Natural killer cell (primary cell): ENCODE measurements at regions of chr6 and their contacts with region 1.

Region 1: GRCh38 chr6:137641474-137642077 is 147.4 kb upstream of the OLIG3 start:
- DNase-seq: peak; percentile 47 to 85
- ATAC-seq: peak; percentile 82 to 95 (median 92)
- H3K4me3 ChIP-seq: no peak overlapping the region
- H3K4me3 Mint-ChIP-seq: no peak overlapping the region
- H3K27ac ChIP-seq: no peak overlapping the region
- H3K27ac Mint-ChIP-seq: no peak overlapping the region
- H3K4me1 ChIP-seq: peaks cover 2% of the 10 kb centered on the region
- H3K4me1 Mint-ChIP-seq: peaks cover 0 to 5% of the 10 kb centered on the region in 2 donors
- H3K27me3 ChIP-seq: no peaks in the 10 kb centered on the region
- H3K27me3 Mint-ChIP-seq: peaks cover 8 to 31% of the 10 kb centered on the region in 2 donors
- CTCF ChIP-seq: peak; percentile 86

Region 2: GRCh38 chr6:136846046-136846445 is 795.5 kb before region 1 on chr6:
- intact Hi-C with region 1: loop called (anchors 10 kb)
- DNase-seq: peak in 1 of 2 donors; percentile 71
- ATAC-seq: peak in 2 of 3 donors; percentile 65 to 68
- H3K4me3 ChIP-seq: no peak overlapping the region
- H3K4me3 Mint-ChIP-seq: no peak overlapping the region
- H3K27ac ChIP-seq: no peak overlapping the region
- H3K27ac Mint-ChIP-seq: no peak overlapping the region
- H3K4me1 ChIP-seq: no peaks in the 10 kb centered on the region
- H3K4me1 Mint-ChIP-seq: no peaks in the 10 kb centered on the region
- H3K27me3 ChIP-seq: no peaks in the 10 kb centered on the region
- H3K27me3 Mint-ChIP-seq: no peaks in the 10 kb centered on the region
- CTCF ChIP-seq: peak; percentile 83

Region 3: GRCh38 chr6:136967876-136968752 is 673.5 kb before region 1 on chr6:
- intact Hi-C with region 1: loop called (anchors 1 kb)
- DNase-seq: peak; percentile 44 to 77
- ATAC-seq: peak; percentile 82 to 99 (median 95)
- H3K4me3 ChIP-seq: no peak overlapping the region
- H3K4me3 Mint-ChIP-seq: no peak overlapping the region
- H3K27ac ChIP-seq: no peak overlapping the region
- H3K27ac Mint-ChIP-seq: no peak overlapping the region
- H3K4me1 ChIP-seq: peaks cover 5% of the 10 kb centered on the region
- H3K4me1 Mint-ChIP-seq: peaks cover 0 to 10% of the 10 kb centered on the region in 2 donors
- H3K27me3 ChIP-seq: peaks cover 9% of the 10 kb centered on the region
- H3K27me3 Mint-ChIP-seq: peaks cover 35 to 57% of the 10 kb centered on the region in 2 donors
- CTCF ChIP-seq: peak; percentile 56

Region 4: DNA sequence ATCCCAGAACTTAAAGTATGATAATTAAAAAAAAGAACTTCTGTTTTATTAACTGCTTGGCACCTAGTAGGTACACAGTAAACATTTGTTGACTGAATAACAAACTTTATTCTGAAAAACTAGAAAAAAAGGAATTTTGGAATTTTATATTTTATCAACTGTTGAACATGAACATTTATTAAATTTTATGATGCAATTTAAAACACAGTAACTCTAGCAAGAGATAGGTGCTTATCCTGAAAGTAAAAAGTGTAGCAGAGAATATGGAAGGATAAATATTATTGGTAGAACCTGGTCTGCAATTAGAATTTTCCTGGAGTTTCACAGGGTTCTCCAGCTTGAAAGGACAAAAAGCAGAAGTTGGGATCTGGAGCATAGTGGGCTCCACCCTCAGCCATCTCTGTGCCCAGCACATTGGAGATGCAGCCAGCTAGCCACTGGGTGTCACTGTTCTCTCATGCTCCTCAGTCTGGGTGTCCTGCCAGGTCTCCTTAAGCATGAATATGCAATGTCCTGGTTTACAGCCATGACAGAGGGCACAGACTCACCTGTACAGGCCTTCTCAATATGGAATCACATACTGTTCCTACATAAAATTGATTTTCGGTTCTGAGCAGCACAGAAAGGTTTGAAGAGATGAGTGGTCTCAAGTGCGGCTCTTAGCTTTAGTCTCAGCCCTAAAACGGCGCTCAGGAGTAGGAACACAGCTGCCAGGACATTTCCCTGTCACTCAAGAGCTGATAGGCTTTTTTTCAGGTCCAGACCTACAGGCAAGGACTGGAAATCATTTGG is 565.1 kb before region 1 on chr6:
- intact Hi-C with region 1: loop called (anchors 1 kb)
- DNase-seq: peak; percentile 42 to 73
- ATAC-seq: peak; percentile 90 to 100 (median 95)
- H3K4me3 ChIP-seq: no peak overlapping the region
- H3K4me3 Mint-ChIP-seq: no peak overlapping the region
- H3K27ac ChIP-seq: no peak overlapping the region
- H3K27ac Mint-ChIP-seq: no peak overlapping the region
- H3K4me1 ChIP-seq: no peaks in the 10 kb centered on the region
- H3K4me1 Mint-ChIP-seq: no peaks in the 10 kb centered on the region
- H3K27me3 ChIP-seq: peaks cover 4% of the 10 kb centered on the region
- H3K27me3 Mint-ChIP-seq: peaks cover 52% of the 10 kb centered on the region in 2 donors
- CTCF ChIP-seq: peak; percentile 71